ENCODE measurements at regions of chr6 and their contacts with region 1.

Region 1: DNA sequence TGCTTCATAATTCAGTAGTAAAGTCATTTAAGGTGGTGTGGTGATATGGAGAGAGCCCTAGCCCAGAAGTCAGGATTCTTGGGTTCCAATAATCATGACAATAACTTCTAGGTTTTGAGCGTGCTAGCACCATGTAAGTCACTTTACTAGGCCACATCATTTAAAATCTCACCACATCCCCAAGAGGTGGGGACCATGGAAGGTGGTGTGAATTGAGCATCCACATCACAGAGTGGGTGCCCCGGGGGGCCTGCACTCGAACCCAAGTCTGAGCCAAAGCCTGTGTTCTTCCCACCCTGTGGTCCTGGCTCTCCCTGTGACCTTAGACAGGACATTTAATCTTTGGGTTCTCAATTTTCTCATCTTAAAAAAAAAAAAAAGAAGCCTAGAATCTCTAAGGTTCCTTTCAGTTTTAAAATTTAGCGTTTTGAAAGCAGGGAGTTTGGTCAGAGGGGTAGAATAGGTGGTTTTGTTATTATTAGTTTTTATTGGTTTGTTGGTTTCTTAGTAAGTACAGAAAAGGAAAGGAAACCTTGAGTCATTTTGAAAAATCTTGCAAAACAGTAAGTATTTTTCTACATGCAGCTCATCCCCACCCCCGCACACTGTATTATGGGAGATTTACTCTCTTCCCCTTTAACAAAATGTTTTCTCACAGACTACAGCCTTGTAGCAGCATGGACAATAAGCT is 26.4 kb downstream of the ARMC2 start:
- DNase-seq: peak; percentile 87
- H3K4me3 Mint-ChIP-seq: peak overlapping the region; percentile 68
- H3K27ac Mint-ChIP-seq: peak overlapping the region; percentile 91
- H3K4me1 Mint-ChIP-seq: peaks cover 67% of the 10 kb centered on the region
- H3K27me3 Mint-ChIP-seq: peaks cover 20% of the 10 kb centered on the region

Region 2: DNA sequence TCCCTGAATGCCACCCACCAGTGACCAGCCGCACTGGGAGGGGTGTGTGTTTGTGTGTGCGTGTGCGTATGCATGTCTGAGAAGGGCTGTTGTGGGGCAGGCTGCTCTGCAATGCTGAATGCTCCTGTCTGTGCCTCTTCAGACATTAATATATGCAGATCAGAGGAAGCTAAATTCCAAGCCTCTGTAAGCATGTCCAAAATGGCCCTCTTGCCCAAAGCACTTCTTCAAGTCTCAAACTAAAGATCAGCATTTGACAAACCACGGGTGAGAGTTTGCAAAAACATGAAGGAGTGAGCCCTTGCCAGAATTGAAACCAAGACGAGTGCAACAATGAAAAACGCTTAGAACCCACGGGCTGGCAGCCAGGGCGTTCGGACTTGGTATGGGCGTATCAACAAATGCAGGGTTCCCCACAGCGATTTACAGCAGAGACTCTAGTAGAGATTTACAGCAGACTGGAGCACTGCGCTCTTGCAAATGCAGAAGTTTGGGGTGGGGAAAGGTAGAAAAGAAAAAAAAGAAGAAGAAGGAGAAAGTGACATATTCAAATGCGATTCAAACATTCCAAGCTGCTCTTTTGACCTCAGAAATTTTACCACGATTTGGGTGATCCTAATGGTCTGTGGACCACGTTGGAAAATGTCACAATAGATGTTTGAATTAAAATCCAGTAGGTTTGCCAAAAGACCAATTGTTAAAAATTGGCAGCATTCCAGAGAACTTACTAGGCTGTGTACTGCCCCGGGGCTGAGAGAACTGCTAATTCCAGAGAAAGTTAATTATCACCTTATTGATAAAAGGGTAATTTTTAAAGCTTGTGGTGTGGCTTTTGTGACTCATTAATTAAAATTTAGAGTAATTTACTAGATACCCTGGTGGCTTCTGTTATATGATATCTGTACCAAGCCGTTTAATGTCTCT is 1054.0 kb before region 1 on chr6:
- intact Hi-C with region 1: loop called (anchors 10 kb)
- DNase-seq: peak; percentile 86
- H3K4me3 Mint-ChIP-seq: peak overlapping the region; percentile 80
- H3K27ac Mint-ChIP-seq: peak overlapping the region; percentile 95
- H3K4me1 Mint-ChIP-seq: peaks cover 82% of the 10 kb centered on the region
- H3K27me3 Mint-ChIP-seq: no peaks in the 10 kb centered on the region

Region 3: GRCh38 chr6:108835218-108835850 is 39.3 kb before region 1 on chr6:
- intact Hi-C with region 1: loop called (anchors 5 kb)
- DNase-seq: peak; percentile 94
- H3K4me3 Mint-ChIP-seq: no peak overlapping the region
- H3K27ac Mint-ChIP-seq: peak overlapping the region; percentile 14
- H3K4me1 Mint-ChIP-seq: peaks cover 26% of the 10 kb centered on the region
- H3K27me3 Mint-ChIP-seq: peaks cover 18% of the 10 kb centered on the region

Region 4: DNA sequence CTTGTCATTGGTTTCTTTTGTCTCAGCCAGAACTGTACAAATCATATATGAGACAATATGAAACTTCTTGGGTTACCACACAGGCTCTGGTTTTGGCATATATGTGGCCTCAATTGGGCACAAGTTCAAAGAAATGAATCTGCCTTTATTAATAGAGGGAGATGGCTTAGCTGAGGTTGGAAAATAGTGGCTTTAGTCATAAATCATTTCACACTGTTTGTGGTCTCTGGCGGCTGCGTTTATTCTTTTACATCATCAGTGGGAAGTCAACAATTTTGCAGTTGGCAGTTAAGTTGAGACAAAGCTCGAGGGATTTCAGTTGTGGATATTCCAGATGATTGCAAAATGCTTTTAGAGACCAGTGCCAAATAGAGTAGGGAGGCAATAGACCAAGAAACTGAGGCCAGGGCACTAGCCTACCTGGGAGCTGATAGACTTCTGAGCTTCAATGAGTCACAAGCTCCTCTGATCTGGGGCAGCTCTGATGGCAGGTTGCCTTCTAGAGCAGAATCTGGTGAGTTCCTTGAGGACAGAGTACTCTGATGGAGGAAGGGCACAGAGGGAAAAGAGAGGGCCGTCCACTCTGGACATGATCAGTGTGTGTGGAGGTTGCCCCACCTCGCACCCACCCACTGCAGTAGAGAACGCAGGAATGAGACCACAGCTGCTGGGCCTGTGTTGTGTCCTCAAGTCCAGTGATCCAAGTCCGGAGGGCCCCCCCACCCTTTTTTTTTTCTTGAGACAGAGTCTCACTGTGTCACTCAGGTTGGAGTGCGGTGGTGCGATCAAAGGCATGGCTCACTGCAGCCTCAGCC is 47.1 kb after region 1 on chr6:
- intact Hi-C with region 1: loop called (anchors 1 kb)
- DNase-seq: peak; percentile 68
- H3K4me3 Mint-ChIP-seq: no peak overlapping the region
- H3K27ac Mint-ChIP-seq: peak overlapping the region; percentile 18
- H3K4me1 Mint-ChIP-seq: peaks cover 24% of the 10 kb centered on the region
- H3K27me3 Mint-ChIP-seq: peaks cover 40% of the 10 kb centered on the region

Region 5: GRCh38 chr6:109073344-109074132 is 198.9 kb after region 1 on chr6:
- intact Hi-C with region 1: no loop called
- DNase-seq: peak; percentile 88
- H3K4me3 Mint-ChIP-seq: no peak overlapping the region
- H3K27ac Mint-ChIP-seq: no peak overlapping the region
- H3K4me1 Mint-ChIP-seq: peaks cover 17% of the 10 kb centered on the region
- H3K27me3 Mint-ChIP-seq: peaks cover 10% of the 10 kb centered on the region